ENCODE measurements at regions of chr4 and their contacts with region 1.

Region 1: GRCh38 chr4:81852031-81852715 is 380.5 kb upstream of the RASGEF1B start:
- DNase-seq: no peak
- H3K4me3 ChIP-seq: no peak overlapping the region
- H3K27ac ChIP-seq: no peak overlapping the region
- H3K4me1 ChIP-seq: no peaks in the 10 kb centered on the region
- H3K27me3 ChIP-seq: peaks cover 0 to 8% (median 0%) of the 10 kb centered on the region in 4 donors
- CTCF ChIP-seq: no peak
- POLR2A ChIP-seq: no peak

Region 2: DNA sequence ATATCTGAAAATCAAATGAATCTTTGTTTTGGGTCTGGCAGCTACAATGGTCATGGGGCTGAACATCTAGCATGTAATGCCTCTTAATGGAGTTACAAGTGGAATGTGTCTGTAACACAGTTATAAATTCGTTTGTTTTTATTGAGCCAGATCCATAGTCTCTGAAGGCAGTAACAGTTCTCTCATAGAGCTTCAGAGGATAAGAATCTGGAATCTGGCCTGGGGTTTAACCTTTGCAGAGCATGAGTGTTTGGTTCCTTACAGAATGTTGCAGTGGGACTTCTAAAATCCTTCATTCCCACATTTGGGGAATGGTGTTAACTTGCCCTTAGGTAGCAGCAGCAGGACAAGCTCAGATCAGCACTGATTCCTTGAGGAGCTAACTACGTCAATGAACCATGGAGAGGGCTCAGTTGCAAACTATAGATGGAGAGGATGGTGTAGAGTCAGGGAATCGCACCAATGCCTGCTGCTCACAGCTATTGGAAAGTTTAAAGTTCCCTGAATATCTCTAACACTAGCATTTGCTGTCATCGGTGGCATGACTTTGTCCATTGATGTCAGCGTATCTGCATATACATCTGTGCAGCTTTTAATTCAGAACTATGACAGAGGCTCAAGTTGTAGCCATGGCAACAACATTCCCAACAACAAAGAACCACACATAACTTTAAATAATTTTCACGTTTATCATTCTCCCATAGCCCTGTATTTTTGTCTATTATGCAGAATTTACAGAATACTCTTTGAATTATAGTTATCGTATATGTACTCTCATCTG is 452.7 kb before region 1 on chr4:
- intact Hi-C with region 1: loop called (anchors 5 kb)
- DNase-seq: no peak
- H3K4me3 ChIP-seq: no peak overlapping the region
- H3K27ac ChIP-seq: no peak overlapping the region
- H3K4me1 ChIP-seq: peaks cover 0 to 7% (median 0%) of the 10 kb centered on the region in 3 donors
- H3K27me3 ChIP-seq: peaks cover 0 to 2% (median 0%) of the 10 kb centered on the region in 4 donors
- CTCF ChIP-seq: no peak
- POLR2A ChIP-seq: no peak